H1 (cell line): ENCODE measurements at regions of chr4 and their contacts with region 1.

Region 1: GRCh38 chr4:7770224-7771050 is 169.2 kb downstream of the AFAP1 start:
- DNase-seq: peak in 1 of 2 experiments; percentile 60
- H3K4me3 ChIP-seq: no peak overlapping the region
- H3K27ac ChIP-seq: no peak overlapping the region
- H3K4me1 ChIP-seq: peaks cover 0 to 5% (median 1%) of the 10 kb centered on the region in 4 experiments; a peak in 4 of 7 replicates
- H3K27me3 ChIP-seq: no peaks in the 10 kb centered on the region
- CTCF ChIP-seq: peak in 2 of 3 experiments; percentile 71 to 81; a peak in 3 of 4 replicates
- EP300 ChIP-seq: no peak
- POLR2A ChIP-seq: no peak
- RAD21 ChIP-seq: peak; percentile 62 to 65

Region 2: GRCh38 chr4:7513671-7514070 is 256.8 kb before region 1 on chr4:
- CTCF ChIA-PET with region 1: no interaction called
- POLR2A ChIA-PET with region 1: no interaction called
- DNase-seq: no peak
- H3K4me3 ChIP-seq: no peak overlapping the region
- H3K27ac ChIP-seq: no peak overlapping the region
- H3K4me1 ChIP-seq: peaks cover 0 to 21% (median 5%) of the 10 kb centered on the region in 4 experiments; a peak in 4 of 7 replicates
- H3K27me3 ChIP-seq: peaks cover 0 to 2% (median 0%) of the 10 kb centered on the region in 4 experiments; a peak in 1 of 7 replicates
- CTCF ChIP-seq: no peak
- EP300 ChIP-seq: no peak
- POLR2A ChIP-seq: no peak
- RAD21 ChIP-seq: no peak

Region 3: DNA sequence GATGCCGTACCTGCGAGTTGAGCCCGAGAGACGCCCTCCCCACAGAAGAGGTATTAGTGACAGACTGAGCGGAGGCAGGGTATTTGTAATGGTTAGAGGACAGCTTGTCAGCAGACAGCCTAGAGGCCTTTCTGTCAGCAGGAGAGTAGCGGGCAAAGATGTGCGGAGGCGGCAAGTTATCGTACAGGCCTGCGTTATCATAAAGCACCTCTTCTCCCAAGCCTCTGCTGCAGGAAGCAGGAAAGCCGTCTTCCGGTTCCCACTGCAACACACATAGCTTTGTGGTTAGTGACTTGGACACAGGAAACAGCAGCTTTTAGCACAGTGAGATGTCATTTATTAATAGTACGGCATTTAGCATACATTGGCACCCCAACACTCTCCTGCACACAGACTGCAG is 10.9 kb after region 1 on chr4:
- CTCF ChIA-PET with region 1: interaction called, 30 read pairs
- POLR2A ChIA-PET with region 1: no interaction called
- DNase-seq: no peak
- H3K4me3 ChIP-seq: no peak overlapping the region
- H3K27ac ChIP-seq: no peak overlapping the region
- H3K4me1 ChIP-seq: no peaks in the 10 kb centered on the region
- H3K27me3 ChIP-seq: no peaks in the 10 kb centered on the region
- CTCF ChIP-seq: no peak
- EP300 ChIP-seq: no peak
- POLR2A ChIP-seq: no peak
- RAD21 ChIP-seq: no peak